Tibial artery (tissue), 4 donors: ENCODE measurements at regions of chr16 and their contacts with region 1.

Region 1: DNA sequence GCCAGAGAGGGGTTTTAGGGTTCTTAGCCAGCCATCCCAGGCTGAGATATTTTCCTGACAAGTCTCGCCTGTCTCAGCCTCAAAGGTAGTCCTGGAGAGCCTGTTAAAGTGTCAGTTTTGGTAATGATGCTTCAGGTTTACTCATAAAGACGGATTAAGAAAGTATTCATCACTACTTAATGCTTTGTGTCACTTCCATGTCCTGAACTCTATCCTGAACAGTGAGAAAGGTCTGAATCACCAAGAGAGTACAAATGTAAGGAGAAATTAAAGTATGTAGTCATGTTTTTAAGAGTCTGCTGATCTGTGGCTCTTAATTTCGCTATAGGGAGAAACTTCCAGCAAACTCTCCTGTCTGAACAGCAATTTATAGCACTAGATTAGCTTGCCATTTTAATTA is 14.0 kb downstream of the RPGRIP1L start:
- DNase-seq: no peak
- H3K4me3 ChIP-seq: no peak overlapping the region
- H3K27ac ChIP-seq: no peak overlapping the region
- H3K4me1 ChIP-seq: no peaks in the 10 kb centered on the region
- H3K27me3 ChIP-seq: no peaks in the 10 kb centered on the region
- CTCF ChIP-seq: no peak

Region 2: DNA sequence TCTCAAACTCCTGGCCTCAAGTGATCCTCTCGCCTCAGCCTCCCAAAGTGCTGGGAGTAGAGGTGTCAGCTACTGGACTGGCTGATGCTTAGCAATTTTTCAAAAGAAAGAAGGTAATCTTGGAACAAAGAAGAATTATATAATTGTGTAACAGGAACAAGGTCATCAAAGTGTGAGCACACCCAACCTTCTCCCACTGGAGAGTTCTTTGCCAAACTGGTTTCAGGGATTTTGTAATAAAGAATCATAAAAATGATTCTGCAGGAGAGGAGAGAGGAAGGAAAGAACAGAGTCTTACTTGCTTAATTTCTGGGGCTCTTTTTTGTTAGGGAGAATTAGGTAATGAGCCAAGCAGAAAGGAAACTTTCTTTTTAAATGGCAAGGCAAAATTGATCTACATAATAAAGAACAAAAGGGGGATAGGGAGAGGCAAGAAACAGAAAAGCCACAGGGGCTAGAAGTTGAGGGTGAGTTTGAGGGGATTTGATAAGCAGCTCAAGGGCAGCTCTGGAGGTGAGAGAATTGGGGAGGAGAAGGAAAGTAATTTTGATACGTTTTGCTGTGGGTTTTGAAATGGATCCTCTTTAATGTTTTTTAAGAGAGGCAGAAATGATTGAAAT is 658.2 kb before region 1 on chr16:
- intact Hi-C with region 1: no loop called
- DNase-seq: no peak
- H3K4me3 ChIP-seq: no peak overlapping the region
- H3K27ac ChIP-seq: no peak overlapping the region
- H3K4me1 ChIP-seq: no peaks in the 10 kb centered on the region
- H3K27me3 ChIP-seq: peaks cover 0 to 3% of the 10 kb centered on the region in 2 donors
- CTCF ChIP-seq: no peak

Region 3: GRCh38 chr16:53865494-53865863 is 175.8 kb after region 1 on chr16:
- intact Hi-C with region 1: no loop called
- DNase-seq: no peak
- H3K4me3 ChIP-seq: no peak overlapping the region
- H3K27ac ChIP-seq: no peak overlapping the region
- H3K4me1 ChIP-seq: peaks cover 0 to 9% (median 2%) of the 10 kb centered on the region in 4 donors
- H3K27me3 ChIP-seq: no peaks in the 10 kb centered on the region
- CTCF ChIP-seq: no peak

Region 4: DNA sequence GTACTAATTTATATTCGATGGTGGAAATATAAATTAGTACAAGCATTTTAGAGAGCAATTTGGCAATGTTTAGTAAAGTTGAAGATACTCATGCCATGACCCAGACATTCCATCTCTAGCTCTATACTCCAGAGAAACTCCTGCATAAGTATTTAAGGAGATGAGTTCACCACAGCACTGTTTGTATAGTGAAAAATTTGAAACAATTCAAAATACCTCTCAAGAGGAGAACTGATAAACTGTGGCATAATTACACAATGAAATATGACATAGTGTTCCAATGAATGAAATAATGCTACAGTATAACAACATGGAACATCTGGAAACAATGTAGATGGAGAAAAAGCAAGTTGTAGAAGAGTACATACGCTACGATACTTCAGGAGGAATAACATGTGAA is 645.6 kb after region 1 on chr16:
- intact Hi-C with region 1: loop called (anchors 5 kb)
- DNase-seq: no peak
- H3K4me3 ChIP-seq: no peak overlapping the region
- H3K27ac ChIP-seq: no peak overlapping the region
- H3K4me1 ChIP-seq: no peaks in the 10 kb centered on the region
- H3K27me3 ChIP-seq: peaks cover 0 to 21% of the 10 kb centered on the region in 2 donors
- CTCF ChIP-seq: no peak